ENCODE measurements at regions of chr13 and their contacts with region 1.

Region 1: DNA sequence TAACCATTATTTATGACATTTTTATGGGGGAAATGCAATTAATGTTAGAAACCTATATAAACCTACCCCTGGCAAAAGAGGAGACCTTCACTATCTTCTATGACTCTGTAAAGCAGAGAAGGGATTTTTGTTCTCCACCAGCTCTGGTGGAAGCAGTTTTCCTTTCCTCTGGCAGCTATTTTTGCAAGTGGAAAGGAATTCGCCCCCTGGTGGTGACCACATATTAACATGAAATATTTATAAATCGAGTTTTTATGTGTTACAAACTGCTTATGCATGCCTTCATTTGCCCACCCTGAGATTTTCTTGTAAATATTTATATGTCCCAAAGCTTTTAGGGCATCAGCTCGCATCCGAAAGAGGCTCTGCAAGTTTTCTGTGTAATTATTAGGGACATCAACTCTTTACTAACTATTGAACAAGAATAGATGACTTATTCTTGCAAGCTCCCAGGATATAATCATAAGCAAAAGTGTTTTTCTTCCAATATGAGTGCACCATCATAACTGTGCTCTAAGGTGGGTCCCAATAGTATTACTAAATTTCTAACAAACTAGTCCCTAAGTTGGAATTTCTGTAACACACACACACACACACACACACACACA is 62.4 kb downstream of the SERTM1 start:
- DNase-seq: no peak
- ATAC-seq: peak in 1 of 4 donors; percentile 45
- H3K4me3 ChIP-seq: no peak overlapping the region
- H3K27ac ChIP-seq: no peak overlapping the region
- H3K4me1 ChIP-seq: no peaks in the 10 kb centered on the region
- H3K27me3 ChIP-seq: no peaks in the 10 kb centered on the region
- CTCF ChIP-seq: peak; percentile 75

Region 2: DNA sequence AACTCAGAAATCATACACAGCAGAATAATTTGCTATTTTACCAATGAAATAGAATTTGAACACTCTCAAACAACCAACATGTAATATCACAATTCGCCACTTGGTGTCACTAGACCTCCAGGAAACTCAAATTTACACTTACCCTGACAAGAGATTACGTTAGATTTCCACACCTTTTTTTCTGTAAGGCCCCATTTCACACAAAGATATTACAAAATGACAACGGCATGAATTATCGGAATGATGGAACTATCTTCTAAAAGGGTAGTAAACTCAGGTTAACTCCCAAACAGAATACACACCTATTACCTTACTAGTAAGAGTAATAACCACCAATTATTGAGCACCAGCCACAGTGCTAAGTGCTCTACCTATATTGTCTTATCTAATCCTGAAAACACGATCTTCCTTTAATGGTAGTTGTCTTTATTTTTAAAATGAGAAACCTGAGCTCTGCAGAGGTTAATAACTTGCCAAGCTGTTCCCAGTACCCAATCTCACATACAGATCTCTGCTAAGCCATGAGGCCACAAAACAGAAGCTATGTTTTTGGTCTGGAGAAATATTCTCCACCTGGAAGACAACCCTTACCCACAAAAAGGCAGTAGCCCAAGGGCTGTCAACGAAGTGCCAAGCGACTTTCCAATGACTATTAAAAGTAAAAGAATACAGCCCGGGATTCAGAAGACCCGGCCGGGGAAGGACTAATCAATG is 757.5 kb before region 1 on chr13:
- intact Hi-C with region 1: loop called (anchors 10 kb)
- DNase-seq: no peak
- ATAC-seq: peak; percentile 17 to 82 (median 60)
- H3K4me3 ChIP-seq: no peak overlapping the region
- H3K27ac ChIP-seq: peak overlapping the region; percentile 71
- H3K4me1 ChIP-seq: peaks cover 5% of the 10 kb centered on the region
- H3K27me3 ChIP-seq: no peaks in the 10 kb centered on the region
- CTCF ChIP-seq: peak; percentile 89

Region 3: DNA sequence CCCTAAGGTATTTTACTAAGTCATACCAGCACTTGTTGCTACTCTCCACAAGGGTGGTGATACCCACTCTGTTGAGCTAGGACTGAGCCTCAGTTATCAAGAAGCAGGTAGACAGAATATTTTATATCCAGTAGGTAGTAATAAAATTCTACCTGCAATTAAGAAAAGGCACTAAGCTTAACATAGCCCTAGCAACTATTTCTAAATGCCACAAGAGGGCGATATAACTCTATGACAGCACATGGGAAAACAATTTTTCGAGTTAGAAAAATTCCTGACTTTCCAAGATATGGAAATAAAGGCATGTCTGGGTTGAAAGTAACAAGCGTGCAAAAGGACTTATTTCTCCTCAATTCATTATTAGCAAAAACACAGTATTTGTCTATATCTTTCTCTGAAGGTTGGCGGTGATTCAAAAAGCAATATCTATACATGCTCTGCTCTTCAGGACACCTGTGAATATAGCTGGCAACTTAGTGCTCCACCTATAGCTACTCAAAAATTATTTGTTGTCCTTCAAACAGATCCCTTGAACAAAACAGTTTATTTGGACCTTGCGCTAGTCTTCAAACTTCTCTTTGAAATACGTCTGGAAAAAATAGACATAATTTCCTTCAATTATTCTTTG is 453.3 kb before region 1 on chr13:
- intact Hi-C with region 1: loop called (anchors 2 to 10 kb)
- DNase-seq: no peak
- ATAC-seq: peak in 2 of 4 donors; percentile 64 to 69
- H3K4me3 ChIP-seq: no peak overlapping the region
- H3K27ac ChIP-seq: no peak overlapping the region
- H3K4me1 ChIP-seq: no peaks in the 10 kb centered on the region
- H3K27me3 ChIP-seq: no peaks in the 10 kb centered on the region
- CTCF ChIP-seq: peak; percentile 84

Region 4: GRCh38 chr13:36346222-36347083 is 389.8 kb before region 1 on chr13 and contains the start of gene SPART:
- intact Hi-C with region 1: loop called (anchors 2 to 5 kb)
- DNase-seq: peak; percentile 93 to 96
- ATAC-seq: peak; percentile 91 to 95 (median 92)
- H3K4me3 ChIP-seq: peak within 1 kb of the TSS; percentile 80
- H3K27ac ChIP-seq: peak within 1 kb of the TSS; percentile 95
- H3K4me1 ChIP-seq: peaks cover 15% of the 10 kb centered on the region
- H3K27me3 ChIP-seq: no peaks in the 10 kb centered on the region
- CTCF ChIP-seq: peak; percentile 96
- total RNA-seq, gene SPART: 41.0 to 51.3 (median 45.4) TPM

Region 5: DNA sequence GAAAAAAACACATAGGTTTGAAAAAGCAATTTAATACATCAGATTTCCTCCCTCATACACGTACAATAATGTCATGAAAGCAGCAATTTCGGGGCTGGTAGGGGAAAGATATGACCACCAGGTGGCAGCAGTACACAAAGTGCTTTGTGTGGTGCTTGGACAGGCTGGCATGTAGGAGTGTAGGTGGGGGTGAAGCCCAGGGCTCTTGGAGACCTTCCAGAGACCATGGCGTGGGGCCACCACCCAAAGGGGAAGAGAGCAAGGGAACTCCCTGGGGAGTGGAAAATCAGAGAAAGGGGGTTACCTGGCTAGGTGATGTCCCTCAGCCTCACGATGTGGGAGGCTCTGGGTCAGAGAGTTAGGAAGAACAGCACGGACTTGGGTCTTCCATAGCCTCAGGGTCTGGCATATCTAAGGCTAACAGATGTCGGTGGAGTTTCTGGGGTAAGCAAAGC is 315.8 kb before region 1 on chr13:
- intact Hi-C with region 1: loop called in 1 of 2 experiments (anchors 10 kb)
- DNase-seq: peak in 1 of 2 donors; percentile 52
- ATAC-seq: peak in 3 of 4 donors; percentile 57 to 79 (median 67)
- H3K4me3 ChIP-seq: no peak overlapping the region
- H3K27ac ChIP-seq: no peak overlapping the region
- H3K4me1 ChIP-seq: no peaks in the 10 kb centered on the region
- H3K27me3 ChIP-seq: no peaks in the 10 kb centered on the region
- CTCF ChIP-seq: peak; percentile 78